Left cardiac atrium (tissue), 4 donors: ENCODE measurements at regions of chr5 and their contacts with region 1.

Region 1: GRCh38 chr5:39520232-39520572 is 95.4 kb upstream of the DAB2 start:
- DNase-seq: no peak
- ATAC-seq: peak; percentile 56 to 76

Region 2: DNA sequence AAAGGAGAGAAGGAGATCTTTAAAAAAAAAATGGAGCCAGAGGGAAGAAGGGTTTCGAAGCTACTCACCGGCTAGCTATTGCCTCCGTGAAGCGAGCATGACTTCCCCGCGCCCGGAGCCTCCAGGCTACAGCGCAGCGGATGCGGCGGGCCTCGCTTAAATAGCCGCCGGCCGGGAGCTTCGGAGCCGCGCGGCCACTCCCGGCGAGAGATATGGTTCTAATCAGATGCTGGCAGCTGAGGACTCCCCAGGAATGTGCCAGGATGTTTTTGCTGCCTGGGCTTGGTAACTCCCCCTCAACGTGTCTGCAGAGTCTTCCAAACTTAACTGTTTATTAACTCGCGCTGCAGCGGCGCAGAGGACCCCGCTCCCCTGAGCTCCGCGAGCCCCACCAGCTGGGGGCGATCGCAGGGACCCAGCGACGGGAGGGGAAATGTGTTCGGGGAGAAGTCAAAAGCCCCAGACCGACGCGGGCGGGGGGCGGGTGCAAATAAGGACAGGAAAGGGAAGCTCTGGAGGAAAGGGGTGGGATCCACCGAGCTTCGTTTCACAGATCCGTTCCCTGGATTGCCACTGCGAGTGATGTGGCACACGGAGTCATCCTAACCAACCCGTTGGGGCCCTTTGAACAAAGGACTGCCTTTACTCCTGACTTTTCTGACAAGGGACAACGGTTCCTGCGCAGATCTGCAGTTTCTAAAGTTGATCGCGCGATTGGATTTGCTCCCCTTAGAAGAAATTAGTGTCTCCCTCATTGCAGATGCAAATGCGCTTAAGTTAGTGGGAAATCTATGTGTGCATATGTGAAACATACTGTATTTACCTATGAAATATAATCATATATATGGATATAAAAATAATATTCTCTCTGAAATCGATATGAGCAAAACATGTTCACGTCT is 95.2 kb before region 1 on chr5 and contains the start of gene DAB2:
- intact Hi-C with region 1: loop called in 1 of 2 experiments (anchors 5 kb)
- DNase-seq: peak; percentile 89
- ATAC-seq: peak; percentile 83 to 85
- total RNA-seq, gene DAB2: 58.2 to 67.3 TPM